Sigmoid colon (tissue), 7 donors: ENCODE measurements at regions of chr22 and their contacts with region 1.

Region 1: DNA sequence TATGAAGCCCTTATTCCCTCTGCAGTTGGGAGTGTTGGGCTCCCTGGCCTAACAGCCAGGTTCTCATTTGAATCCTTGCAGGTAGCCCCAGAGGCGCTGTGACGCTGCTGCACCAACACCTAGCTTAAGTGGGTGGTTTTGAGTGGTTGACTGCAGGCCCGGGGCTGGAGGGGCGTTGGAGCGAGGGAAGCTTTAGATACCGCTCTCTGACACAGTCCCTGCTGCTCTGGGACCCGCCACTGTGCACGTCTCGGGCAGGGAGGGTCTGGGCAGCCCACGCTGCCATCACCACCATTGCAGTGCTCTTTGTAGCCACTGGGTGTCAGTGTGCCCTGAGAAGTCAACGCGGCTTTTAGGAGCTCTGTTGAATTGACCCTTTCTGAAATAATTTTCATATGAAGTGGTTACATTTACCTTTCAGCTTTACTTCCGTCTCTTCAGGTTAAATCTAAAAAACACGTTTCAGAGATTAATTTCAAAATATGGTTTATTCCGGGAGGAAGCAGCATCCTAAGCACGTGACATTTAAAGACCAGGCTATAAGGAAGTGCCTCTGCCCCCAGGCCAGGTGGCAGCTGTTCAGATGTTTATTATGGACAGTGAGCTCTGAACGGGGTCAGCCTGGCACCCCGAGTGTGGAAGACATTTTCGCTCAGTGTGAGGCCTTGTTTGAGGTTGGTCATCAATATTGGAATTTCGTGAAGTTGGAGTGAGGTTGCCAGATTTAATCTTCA is 30.9 kb upstream of the PARVB start:
- DNase-seq: peak; percentile 65
- H3K4me3 ChIP-seq: no peak overlapping the region
- H3K27ac ChIP-seq: no peak overlapping the region
- H3K4me1 ChIP-seq: peaks cover 0 to 8% (median 0%) of the 10 kb centered on the region in 4 donors
- H3K27me3 ChIP-seq: no peaks in the 10 kb centered on the region
- CTCF ChIP-seq: peak; percentile 90 to 95 (median 92)
- EP300 ChIP-seq: no peak
- POLR2A ChIP-seq: no peak

Region 2: DNA sequence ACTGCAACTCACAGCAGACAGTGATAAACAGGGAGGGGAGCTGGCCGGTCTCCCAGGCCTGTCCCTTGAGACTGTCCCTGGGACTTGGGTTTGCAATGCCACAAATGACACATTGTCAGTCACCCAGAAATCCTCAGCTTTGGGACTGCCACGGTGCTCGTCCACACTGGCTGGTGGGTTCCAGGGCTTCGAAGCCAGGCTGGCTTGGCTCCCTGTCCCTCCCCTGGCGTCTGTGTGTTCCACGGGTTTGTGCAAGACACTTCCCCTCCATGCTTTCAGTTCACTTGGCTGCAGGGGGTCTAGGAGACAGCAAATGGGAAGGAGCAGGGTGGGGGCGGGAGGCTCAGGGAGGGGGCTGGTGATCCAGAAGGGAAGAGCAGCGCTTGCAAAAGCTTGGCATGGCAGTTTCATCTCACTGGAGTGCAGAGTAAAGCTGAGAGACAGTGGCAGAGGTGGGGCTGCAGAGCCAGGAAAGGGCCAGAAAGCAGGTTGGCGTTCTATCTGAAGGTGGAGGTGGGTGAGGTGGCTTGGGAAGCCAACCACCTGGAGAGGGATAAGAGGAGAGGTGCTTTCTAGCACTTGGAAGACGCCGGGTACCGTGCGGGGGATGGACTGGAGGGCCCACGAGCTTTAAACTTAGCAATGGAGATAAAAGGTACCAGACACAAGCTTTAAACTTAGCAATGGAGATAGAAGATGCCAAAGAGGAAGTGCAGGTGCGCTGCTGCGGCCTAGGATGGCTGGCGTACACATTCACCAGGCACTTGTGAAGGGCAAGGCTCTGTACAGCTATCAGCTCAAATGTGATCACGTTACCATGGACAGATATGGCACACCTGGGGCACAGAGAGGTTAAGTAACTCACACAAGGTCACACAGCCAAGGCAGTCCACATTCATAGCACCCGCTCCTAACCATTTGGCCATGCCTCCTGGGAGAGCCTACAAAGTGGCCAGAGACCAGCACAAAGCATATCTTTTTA is 406.0 kb after region 1 on chr22:
- intact Hi-C with region 1: no loop called
- DNase-seq: no peak
- H3K4me3 ChIP-seq: no peak overlapping the region
- H3K27ac ChIP-seq: no peak overlapping the region
- H3K4me1 ChIP-seq: no peaks in the 10 kb centered on the region
- H3K27me3 ChIP-seq: no peaks in the 10 kb centered on the region
- CTCF ChIP-seq: no peak
- EP300 ChIP-seq: no peak
- POLR2A ChIP-seq: no peak

Region 3: DNA sequence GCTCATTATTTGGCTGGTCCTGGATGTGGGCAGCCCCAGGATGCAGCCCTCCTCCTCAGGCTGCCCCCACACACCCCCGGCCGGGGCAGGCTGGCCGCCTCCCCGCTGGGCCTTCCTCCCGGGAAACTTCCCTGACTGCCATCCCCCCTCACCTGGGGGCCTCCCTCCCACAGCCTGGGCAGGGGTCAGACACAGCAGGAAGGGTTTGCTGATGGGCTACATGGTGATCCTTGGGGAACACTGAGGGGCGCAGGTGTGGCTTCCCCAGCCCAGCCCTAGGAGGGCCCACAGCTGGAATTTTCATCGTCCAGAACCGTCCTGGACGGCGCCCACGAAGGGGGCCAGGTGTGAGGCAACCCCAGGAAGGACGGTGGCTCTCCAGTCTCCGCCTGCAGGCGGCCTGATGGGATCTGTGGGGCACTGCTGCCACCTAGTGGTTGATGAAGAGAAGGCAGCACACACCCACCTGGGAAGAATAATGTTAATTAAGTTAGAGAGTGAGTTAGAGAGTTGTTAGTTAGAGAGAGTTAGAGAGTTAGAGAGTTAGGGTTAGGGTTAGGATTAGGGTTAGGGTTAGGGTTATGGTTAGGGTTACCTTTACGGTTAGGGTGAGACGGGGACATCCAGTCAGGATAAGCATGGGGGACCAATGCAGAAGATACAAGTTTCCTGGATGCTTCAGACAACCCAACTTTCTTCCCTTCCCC is 632.9 kb after region 1 on chr22:
- intact Hi-C with region 1: loop called (anchors 1 kb)
- DNase-seq: peak; percentile 83
- H3K4me3 ChIP-seq: no peak overlapping the region
- H3K27ac ChIP-seq: no peak overlapping the region
- H3K4me1 ChIP-seq: peaks cover 0 to 4% (median 0%) of the 10 kb centered on the region in 4 donors
- H3K27me3 ChIP-seq: peaks cover 0 to 15% (median 9%) of the 10 kb centered on the region in 3 donors
- CTCF ChIP-seq: peak; percentile 98 to 100 (median 99)
- EP300 ChIP-seq: no peak
- POLR2A ChIP-seq: no peak